HCT116 (cell line): ENCODE measurements at regions of chr11 and their contacts with region 1.

Region 1: DNA sequence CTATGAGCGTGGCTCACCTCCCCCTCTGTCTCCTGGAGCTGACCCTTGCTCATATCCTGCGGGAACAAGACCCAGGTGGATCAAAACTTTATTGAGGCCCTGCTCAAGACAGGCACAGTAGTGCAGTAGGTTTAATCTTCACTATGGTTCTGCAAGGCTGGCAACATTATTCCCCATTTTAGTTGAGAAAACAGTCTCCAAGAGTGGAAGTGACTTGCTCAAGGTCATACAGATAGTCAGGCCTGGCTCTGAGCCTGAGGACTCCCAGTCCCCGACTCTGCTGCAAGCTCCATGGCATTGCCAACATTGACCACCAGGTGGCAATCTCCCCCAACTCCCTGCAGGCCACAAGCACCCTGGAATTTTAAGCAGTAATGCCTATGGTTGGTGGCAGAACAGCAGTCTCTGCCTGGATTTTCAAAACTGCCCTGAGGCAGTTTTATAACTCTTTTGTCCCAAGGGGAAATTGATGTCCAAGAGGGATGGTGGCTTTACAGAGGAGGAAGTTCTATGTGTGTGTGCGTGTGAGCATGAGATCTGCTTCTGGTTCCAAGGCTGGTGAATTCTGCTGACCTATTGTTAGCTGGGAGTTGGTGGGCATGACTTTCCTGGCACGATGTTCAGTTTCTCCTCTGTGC is 34.1 kb downstream of the NEU3 start:
- DNase-seq: peak; percentile 60
- ATAC-seq: peak; percentile 99
- H3K4me3 ChIP-seq: no peak overlapping the region
- H3K27ac ChIP-seq: no peak overlapping the region
- H3K4me1 ChIP-seq: no peaks in the 10 kb centered on the region
- H3K27me3 ChIP-seq: no peaks in the 10 kb centered on the region
- CTCF ChIP-seq: peak; percentile 95 to 98 (median 98)
- POLR2A ChIP-seq: no peak
- RAD21 ChIP-seq: peak; percentile 95

Region 2: DNA sequence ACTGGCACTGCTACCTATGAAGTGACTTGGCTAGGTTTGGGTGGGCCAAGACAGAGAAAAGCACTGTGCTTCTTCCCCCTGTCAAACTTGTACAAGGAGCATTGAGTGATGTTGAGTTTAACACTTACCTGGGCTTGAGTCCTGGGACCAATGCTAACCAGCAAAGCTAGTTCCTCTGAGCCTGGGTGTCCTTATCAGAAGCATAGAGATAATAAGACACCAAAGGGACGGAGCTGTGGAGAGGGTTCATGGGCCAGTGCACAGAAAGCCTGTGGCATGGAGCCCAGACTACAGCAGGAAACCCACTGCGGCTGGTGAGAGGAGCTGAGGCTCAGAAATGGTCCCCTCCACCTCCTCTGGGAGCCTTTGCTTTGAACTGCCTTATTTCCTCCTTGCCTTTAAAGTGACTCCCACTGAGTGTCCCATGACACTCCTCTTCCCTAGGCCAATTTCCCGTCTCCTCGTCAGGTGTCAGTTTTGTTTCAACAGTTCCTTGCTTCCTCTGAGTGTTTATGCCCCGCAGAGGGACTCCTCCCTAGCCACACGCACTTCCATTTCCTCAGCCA is 137.4 kb after region 1 on chr11:
- CTCF ChIA-PET with region 1: no interaction called
- POLR2A ChIA-PET with region 1: no interaction called
- RAD21 ChIA-PET with region 1: no interaction called
- intact Hi-C with region 1: no loop called
- DNase-seq: no peak
- ATAC-seq: no peak
- H3K4me3 ChIP-seq: no peak overlapping the region
- H3K27ac ChIP-seq: no peak overlapping the region
- H3K4me1 ChIP-seq: peaks cover 0 to 10% of the 10 kb centered on the region in 2 experiments; a peak in 2 of 4 replicates
- H3K27me3 ChIP-seq: 0 out of 2 replicates have a peak, but pooled peaks cover 4% of the 10 kb centered on the region
- CTCF ChIP-seq: no peak
- POLR2A ChIP-seq: no peak
- RAD21 ChIP-seq: no peak

Region 3: GRCh38 chr11:75270896-75271418 is 248.1 kb after region 1 on chr11:
- CTCF ChIA-PET with region 1: interaction called, 10 read pairs
- POLR2A ChIA-PET with region 1: no interaction called
- RAD21 ChIA-PET with region 1: no interaction called
- intact Hi-C with region 1: no loop called
- DNase-seq: peak; percentile 13
- ATAC-seq: peak; percentile 70
- H3K4me3 ChIP-seq: no peak overlapping the region
- H3K27ac ChIP-seq: no peak overlapping the region
- H3K4me1 ChIP-seq: no peaks in the 10 kb centered on the region
- H3K27me3 ChIP-seq: no peaks in the 10 kb centered on the region
- CTCF ChIP-seq: peak; percentile 51 to 59 (median 55); a peak in 5 of 6 replicates
- POLR2A ChIP-seq: no peak
- RAD21 ChIP-seq: peak; percentile 57